Left cardiac atrium (tissue), 4 donors: ENCODE measurements at regions of chr4 and their contacts with region 1.

Region 1: GRCh38 chr4:165537028-165537648 is 158.3 kb downstream of the CPE start:
- DNase-seq: no peak
- ATAC-seq: peak; percentile 55 to 72

Region 2: DNA sequence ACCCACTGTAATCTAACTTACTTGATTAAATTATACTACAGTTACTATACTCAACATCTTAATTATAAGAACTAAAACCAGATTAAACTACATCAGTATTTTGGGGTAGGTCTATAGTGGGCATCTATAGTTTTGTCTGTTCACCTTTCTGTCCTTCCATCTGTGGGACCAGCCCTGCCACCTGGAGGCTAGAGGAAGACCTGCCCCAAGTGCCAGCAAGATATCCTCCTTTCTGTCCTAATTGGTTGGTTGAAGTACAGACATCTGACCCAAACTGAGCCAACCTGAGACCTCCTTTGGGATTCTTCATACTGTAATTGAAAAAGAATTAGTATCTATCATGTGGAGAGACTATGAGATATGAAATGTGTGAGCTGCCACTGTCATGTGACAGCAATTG is 163.7 kb after region 1 on chr4:
- intact Hi-C with region 1: loop called in 1 of 2 experiments (anchors 10 kb)
- DNase-seq: no peak
- ATAC-seq: no peak

Region 3: DNA sequence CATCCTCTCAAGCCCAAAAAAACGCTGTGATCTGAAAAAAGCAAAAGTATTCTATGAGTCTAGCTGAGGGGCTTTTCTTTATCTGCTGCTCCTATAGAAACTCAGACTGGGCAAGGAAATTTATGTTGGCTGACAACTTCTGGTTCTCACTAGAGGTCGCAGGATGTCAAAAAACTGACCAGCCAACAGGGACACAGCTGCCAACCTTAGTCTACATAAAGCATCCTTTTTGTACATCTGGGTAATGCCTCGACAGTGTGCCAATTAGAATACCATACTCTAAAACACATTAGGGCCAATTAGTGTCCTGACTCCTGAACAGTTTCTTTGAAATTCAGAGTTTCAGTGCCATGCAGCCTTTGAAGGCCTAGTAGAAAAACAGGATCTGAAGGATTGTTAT is 327.1 kb after region 1 on chr4:
- intact Hi-C with region 1: loop called in 1 of 2 experiments (anchors 10 kb)
- DNase-seq: no peak
- ATAC-seq: no peak

Region 4: GRCh38 chr4:166091912-166092510 is 554.9 kb after region 1 on chr4:
- intact Hi-C with region 1: loop called (anchors 1 to 5 kb)
- DNase-seq: no peak
- ATAC-seq: peak in 1 of 2 donors; percentile 61